ENCODE measurements at regions of chr13 and their contacts with region 1.

Region 1: GRCh38 chr13:27712421-27712820 is 79.9 kb upstream of the GSX1 start:
- DNase-seq: no peak
- ATAC-seq: no peak

Region 2: GRCh38 chr13:27406178-27406939 is 306.1 kb before region 1 on chr13:
- intact Hi-C with region 1: loop called (anchors 10 kb)
- DNase-seq: no peak
- ATAC-seq: no peak

Region 3: DNA sequence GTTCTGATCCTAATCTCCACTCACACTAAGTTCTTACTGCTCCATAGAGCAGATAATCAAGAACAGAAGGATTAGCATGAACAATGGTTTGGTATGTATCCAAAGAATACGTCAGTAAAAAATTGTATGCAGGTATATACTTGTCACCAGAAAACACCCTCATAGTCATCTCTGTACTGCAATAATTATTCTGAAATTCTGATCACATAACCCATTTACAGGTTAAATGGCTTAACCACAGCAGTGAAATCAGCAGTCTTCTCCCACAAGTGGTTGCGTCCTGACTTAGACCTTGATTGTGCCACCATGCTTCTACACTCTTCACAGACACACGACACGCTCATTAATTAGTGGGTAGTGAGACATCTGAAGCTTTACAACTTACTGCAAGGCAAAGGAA is 143.0 kb before region 1 on chr13:
- intact Hi-C with region 1: no loop called
- DNase-seq: no peak
- ATAC-seq: no peak

Region 4: GRCh38 chr13:27583614-27584031 is 128.8 kb before region 1 on chr13:
- intact Hi-C with region 1: no loop called
- DNase-seq: no peak
- ATAC-seq: no peak